AG04449 (cell line): ENCODE measurements at regions of chrX and their contacts with region 1.

Region 1: GRCh38 chrX:53433651-53434639 is at the start of gene HSD17B10:
- DNase-seq: no peak
- H3K4me3 ChIP-seq: peak within 1 kb of the TSS; percentile 75
- CTCF ChIP-seq: no peak

Region 2: DNA sequence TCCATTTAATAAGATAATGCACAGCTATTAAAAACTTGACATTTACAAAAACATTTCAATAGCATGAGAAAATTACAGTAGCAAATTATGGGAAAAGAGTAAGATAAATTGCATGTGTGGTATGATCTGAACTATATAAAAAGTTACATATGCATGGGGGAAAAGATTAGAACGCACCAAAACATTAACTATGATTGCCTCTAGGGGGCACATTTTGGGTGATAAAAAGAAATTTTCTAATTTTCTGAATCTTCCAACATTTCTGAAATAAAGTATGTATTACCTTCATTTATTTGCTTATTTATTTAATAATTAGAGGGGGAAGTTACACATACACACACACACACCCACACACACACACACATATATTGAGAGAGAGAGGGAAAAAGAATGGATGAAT is 189.3 kb before region 1 on chrX:
- CTCF ChIA-PET with region 1: interaction called, 10 read pairs
- POLR2A ChIA-PET with region 1: no interaction called
- DNase-seq: no peak
- H3K4me3 ChIP-seq: no peak overlapping the region
- CTCF ChIP-seq: no peak

Region 3: GRCh38 chrX:53997724-53998123 is 563.8 kb after region 1 on chrX:
- CTCF ChIA-PET with region 1: no interaction called
- POLR2A ChIA-PET with region 1: no interaction called
- DNase-seq: no peak
- H3K4me3 ChIP-seq: no peak overlapping the region
- CTCF ChIP-seq: no peak